GM12878 (cell line): ENCODE measurements at regions of chr5 and their contacts with region 1.

Region 1: DNA sequence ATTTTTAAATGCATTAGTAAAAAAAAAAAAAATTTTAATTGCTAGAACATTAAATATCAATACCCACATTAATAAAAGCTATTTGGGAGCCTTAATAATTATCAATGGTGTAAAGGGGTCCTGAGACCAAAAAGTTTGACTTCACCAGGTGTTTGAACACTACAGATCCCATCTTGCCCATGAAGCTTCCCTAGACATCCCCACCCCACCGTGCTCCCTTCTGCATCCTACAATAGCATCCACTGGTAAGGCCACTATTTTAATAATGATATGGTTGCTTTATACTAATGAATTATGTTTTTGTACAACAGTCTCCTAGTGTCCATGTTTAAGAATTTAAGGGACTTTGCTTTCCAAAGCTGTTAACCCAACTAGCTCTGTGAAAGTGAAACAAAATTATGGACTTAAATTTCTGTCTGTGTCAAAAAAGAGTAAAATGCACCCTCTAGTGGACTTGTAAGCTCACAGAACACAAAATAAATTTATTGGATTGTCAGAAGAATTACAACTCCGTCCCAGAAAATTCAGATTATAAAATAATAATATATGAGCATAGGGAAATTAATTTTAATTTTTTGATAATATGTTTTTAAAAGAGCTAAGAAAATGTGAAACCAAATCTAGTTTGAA is 76.0 kb downstream of the ARL15 start:
- DNase-seq: no peak
- ATAC-seq: peak; percentile 72
- H3K4me3 ChIP-seq: no peak overlapping the region
- H3K27ac ChIP-seq: no peak overlapping the region
- H3K4me1 ChIP-seq: no peaks in the 10 kb centered on the region
- H3K27me3 ChIP-seq: no peaks in the 10 kb centered on the region
- CTCF ChIP-seq: peak; percentile 26 to 50 (median 50); a peak in 5 of 6 replicates
- EP300 ChIP-seq: no peak
- POLR2A ChIP-seq: no peak
- RAD21 ChIP-seq: peak; percentile 66

Region 2: GRCh38 chr5:53262348-53262970 is 972.0 kb before region 1 on chr5:
- CTCF ChIA-PET with region 1: interaction called, 4 read pairs
- POLR2A ChIA-PET with region 1: no interaction called
- RAD21 ChIA-PET with region 1: no interaction called
- SMC1A ChIA-PET with region 1: no interaction called
- in situ Hi-C with region 1: loop called (anchors 10 kb)
- intact Hi-C with region 1: loop called (anchors 5 kb)
- DNase-seq: no peak
- ATAC-seq: peak; percentile 43; the same call in 2 of the 3 replicates
- H3K4me3 ChIP-seq: no peak overlapping the region
- H3K27ac ChIP-seq: no peak overlapping the region
- H3K4me1 ChIP-seq: no peaks in the 10 kb centered on the region
- H3K27me3 ChIP-seq: no peaks in the 10 kb centered on the region
- CTCF ChIP-seq: peak in 2 of 3 experiments; percentile 15 to 43; a peak in 3 of 6 replicates
- EP300 ChIP-seq: no peak
- POLR2A ChIP-seq: no peak
- RAD21 ChIP-seq: peak; percentile 48

Region 3: GRCh38 chr5:54249210-54250028 is 15.0 kb after region 1 on chr5:
- CTCF ChIA-PET with region 1: interaction called, 27 read pairs
- POLR2A ChIA-PET with region 1: interaction called, 3 read pairs
- RAD21 ChIA-PET with region 1: interaction called, 9 read pairs
- SMC1A ChIA-PET with region 1: interaction called, 3 read pairs
- in situ Hi-C with region 1: no loop called
- intact Hi-C with region 1: no loop called
- DNase-seq: no peak
- ATAC-seq: peak; percentile 85
- H3K4me3 ChIP-seq: no peak overlapping the region
- H3K27ac ChIP-seq: no peak overlapping the region
- H3K4me1 ChIP-seq: no peaks in the 10 kb centered on the region; the same call in none of the 2 replicates
- H3K27me3 ChIP-seq: no peaks in the 10 kb centered on the region
- CTCF ChIP-seq: no peak
- EP300 ChIP-seq: no peak
- POLR2A ChIP-seq: no peak
- RAD21 ChIP-seq: no peak

Region 4: DNA sequence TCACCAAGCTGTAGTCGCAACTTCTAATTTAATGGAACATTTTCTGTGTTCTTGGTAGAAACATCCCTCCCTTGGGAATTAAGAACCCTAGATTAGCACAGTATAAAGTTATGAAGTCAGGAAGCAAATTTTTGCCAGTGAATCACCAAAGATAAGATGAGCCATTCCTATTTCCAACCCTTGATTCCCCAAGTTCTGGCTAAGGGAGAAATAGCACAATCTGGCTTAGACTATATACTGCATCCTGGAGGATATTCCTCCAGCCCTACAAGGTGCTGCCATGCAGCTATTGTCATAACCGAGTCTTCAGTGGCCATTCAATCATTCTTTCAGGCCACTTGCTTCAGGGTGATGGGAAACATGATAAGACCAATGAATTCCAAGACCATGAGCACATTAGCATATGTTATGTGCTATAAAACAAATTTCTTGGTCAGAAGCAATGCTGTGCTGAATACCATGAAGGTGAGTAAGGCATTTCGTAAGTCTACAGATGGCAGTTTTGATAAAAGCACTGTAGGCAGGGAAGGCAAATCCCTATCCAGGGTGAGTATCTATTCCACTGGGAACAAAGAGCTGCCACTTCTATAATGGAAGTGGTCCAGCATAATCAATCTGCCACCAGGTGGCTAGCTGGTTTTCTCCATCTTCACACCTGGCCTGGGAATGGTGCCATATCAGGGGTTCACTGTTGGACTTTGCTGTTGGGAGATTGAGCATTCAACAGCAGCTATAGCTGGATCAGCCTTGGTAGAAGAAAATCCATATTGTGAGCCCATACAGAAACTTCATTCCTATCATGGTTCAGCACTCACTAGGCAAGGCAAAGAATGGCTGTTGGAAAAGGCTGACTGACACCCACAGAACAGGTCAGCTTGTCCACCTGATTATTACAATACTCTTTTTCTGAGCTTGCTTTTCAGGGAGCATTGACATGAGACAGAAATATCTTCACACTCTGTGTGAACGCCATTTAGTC is 95.6 kb after region 1 on chr5:
- CTCF ChIA-PET with region 1: no interaction called
- POLR2A ChIA-PET with region 1: no interaction called
- RAD21 ChIA-PET with region 1: no interaction called
- SMC1A ChIA-PET with region 1: no interaction called
- in situ Hi-C with region 1: no loop called
- intact Hi-C with region 1: no loop called
- DNase-seq: no peak
- ATAC-seq: no peak
- H3K4me3 ChIP-seq: no peak overlapping the region
- H3K27ac ChIP-seq: no peak overlapping the region
- H3K4me1 ChIP-seq: no peaks in the 10 kb centered on the region
- H3K27me3 ChIP-seq: no peaks in the 10 kb centered on the region; a peak in 1 of 4 replicates
- CTCF ChIP-seq: no peak
- EP300 ChIP-seq: no peak
- POLR2A ChIP-seq: no peak
- RAD21 ChIP-seq: no peak